ENCODE measurements at regions of chr7 and their contacts with region 1.

Region 1: DNA sequence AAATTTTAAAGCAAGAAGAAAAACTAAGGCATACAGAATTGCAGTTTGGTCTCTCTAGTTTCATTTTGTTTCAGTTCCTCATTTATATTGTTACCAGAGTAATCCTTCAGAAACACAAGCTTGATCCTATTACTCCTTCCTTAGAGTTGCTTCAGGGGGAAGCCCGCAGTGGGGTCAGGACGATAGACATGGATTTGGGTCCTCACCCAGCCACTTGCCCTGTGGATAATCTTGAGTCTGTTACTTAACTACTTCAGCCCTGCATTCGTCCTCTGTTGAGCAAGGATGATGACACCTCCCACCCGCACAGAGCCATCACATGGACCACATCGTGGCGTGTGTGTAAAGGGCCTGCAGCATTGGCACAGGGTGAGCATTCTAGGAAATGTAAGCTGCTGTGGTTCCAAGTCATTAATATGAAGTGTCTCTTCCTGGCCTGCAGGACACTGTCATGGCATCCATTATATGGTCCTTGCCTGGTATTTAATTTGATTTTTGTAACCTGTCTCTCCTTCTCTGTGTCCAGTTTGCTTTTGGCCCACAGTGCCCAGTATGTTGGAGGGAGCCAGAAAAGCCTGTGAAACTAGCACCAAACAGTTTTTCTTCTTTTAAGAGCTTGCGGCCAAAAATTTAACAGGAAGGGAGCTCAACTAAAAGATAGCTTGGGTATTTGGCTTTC is 111.2 kb downstream of the EEPD1 start:
- DNase-seq: peak; percentile 86
- H3K4me3 ChIP-seq: no peak overlapping the region
- H3K27ac ChIP-seq: peak overlapping the region; percentile 58 to 86 (median 71)
- H3K4me1 ChIP-seq: peaks cover 0 to 86% (median 78%) of the 10 kb centered on the region in 4 donors
- H3K27me3 ChIP-seq: no peaks in the 10 kb centered on the region
- CTCF ChIP-seq: no peak
- EP300 ChIP-seq: peak in 2 of 4 donors; percentile 18 to 54
- POLR2A ChIP-seq: no peak

Region 2: DNA sequence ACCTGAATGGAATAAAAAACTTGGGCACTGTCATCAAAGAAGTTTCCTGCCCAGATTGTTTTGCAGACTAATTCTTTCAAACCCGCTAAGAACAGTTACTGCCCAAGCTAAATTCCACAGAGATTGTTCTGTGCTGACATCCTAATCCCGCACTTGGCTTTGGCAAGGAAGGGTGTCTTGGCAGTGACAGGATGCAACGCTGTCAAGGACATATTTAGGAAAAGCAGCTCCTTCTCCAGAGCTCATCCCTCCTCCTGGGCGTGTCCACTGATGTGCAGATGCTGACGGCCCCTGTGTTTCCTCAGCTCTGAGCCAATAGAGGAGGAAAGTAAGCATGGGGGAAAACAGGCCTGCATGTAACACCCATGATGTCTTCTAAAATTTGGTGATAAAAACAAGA is 37.0 kb before region 1 on chr7:
- intact Hi-C with region 1: loop called (anchors 1 kb)
- DNase-seq: peak; percentile 93
- H3K4me3 ChIP-seq: no peak overlapping the region
- H3K27ac ChIP-seq: no peak overlapping the region
- H3K4me1 ChIP-seq: peaks cover 0 to 44% (median 11%) of the 10 kb centered on the region in 4 donors
- H3K27me3 ChIP-seq: no peaks in the 10 kb centered on the region
- CTCF ChIP-seq: no peak
- EP300 ChIP-seq: peak in 2 of 4 donors; percentile 36 to 61
- POLR2A ChIP-seq: no peak

Region 3: GRCh38 chr7:36280840-36281812 is 16.9 kb after region 1 on chr7:
- intact Hi-C with region 1: loop called (anchors 1 kb)
- DNase-seq: peak; percentile 90
- H3K4me3 ChIP-seq: peak overlapping the region in 2 of 4 donors; percentile 23 to 27
- H3K27ac ChIP-seq: peak overlapping the region; percentile 72 to 86 (median 82)
- H3K4me1 ChIP-seq: peaks cover 0 to 79% (median 70%) of the 10 kb centered on the region in 4 donors
- H3K27me3 ChIP-seq: no peaks in the 10 kb centered on the region
- CTCF ChIP-seq: peak in 1 of 4 experiments; percentile 9
- EP300 ChIP-seq: peak in 1 of 4 donors; percentile 49
- POLR2A ChIP-seq: no peak

Measured in sigmoid colon (tissue), 7 donors.